CD4-positive, alpha-beta memory T cell (primary cell): ENCODE measurements at regions of chr1 and their contacts with region 1.

Region 1: DNA sequence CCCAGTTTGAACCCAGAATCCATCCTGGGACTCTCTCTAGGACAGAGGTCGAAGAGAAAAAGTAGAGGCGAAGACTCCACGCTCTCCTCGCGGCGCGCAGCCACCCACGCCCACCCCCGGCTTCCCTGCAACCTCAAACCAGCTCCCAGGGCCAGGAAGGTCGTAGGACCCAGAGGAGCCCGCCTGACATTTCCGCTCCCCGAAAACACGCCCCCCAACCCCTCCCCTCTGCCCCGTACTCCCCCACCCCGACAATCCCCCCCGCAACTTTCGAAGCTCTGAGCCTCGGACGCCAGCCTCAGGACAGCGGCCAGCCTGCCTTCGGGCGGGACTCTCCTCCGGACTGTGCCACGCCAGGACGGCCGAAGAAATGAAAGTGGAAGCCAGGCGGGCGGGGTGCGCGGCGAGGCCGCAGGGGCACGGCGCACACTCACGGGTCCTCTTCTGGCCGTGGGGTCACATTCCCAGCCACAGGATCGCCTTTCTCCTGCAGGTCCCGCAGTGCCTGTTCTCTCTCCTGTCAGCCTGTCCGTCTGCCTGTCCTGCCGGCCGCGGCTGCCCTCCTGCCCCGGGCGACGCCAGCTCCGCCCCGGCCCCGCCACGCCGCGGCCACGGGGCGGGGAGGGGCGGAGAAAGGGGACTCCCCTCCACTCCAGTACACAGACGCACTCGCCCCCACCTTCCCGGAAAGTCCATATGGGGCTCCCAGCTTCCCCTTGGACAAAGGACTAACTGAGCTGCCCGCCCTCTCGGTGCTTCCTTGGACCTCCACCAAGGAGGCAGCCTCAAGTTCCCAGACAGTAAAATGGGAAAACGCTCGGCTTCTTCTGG is at the start of gene MOB3C:
- DNase-seq: peak; percentile 62 to 74 (median 63)
- H3K4me3 ChIP-seq: peak within 1 kb of the TSS; percentile 82 to 96
- H3K4me3 Mint-ChIP-seq: peak within 1 kb of the TSS; percentile 92 to 96 (median 94)
- H3K27ac ChIP-seq: peak within 1 kb of the TSS; percentile 81
- H3K27ac Mint-ChIP-seq: peak within 1 kb of the TSS; percentile 87 to 97 (median 94)
- H3K4me1 ChIP-seq: peaks cover 51% of the 10 kb centered on the region
- H3K4me1 Mint-ChIP-seq: peaks cover 22 to 57% (median 41%) of the 10 kb centered on the region in 4 donors
- H3K27me3 ChIP-seq: no peaks in the 10 kb centered on the region
- H3K27me3 Mint-ChIP-seq: no peaks in the 10 kb centered on the region
- total RNA-seq, gene MOB3C: 27.8 to 29.5 TPM

Region 2: GRCh38 chr1:46667782-46668760 is 51.6 kb after region 1 on chr1 and contains the start of gene ATPAF1:
- CTCF ChIA-PET with region 1: no interaction called
- POLR2A ChIA-PET with region 1: interaction called, 23 read pairs
- intact Hi-C with region 1: no loop called
- DNase-seq: peak; percentile 62 to 72 (median 68)
- H3K4me3 ChIP-seq: peak within 1 kb of the TSS; percentile 44 to 66
- H3K4me3 Mint-ChIP-seq: peak within 1 kb of the TSS in 7 of 8 donors; percentile 85 to 91 (median 88)
- H3K27ac ChIP-seq: peak within 1 kb of the TSS; percentile 48
- H3K27ac Mint-ChIP-seq: peak within 1 kb of the TSS; percentile 48 to 85 (median 78)
- H3K4me1 ChIP-seq: peaks cover 23% of the 10 kb centered on the region
- H3K4me1 Mint-ChIP-seq: peaks cover 15 to 26% (median 21%) of the 10 kb centered on the region in 4 donors
- H3K27me3 ChIP-seq: no peaks in the 10 kb centered on the region
- H3K27me3 Mint-ChIP-seq: no peaks in the 10 kb centered on the region
- total RNA-seq, gene ATPAF1: 32.9 to 37.6 TPM

Region 3: DNA sequence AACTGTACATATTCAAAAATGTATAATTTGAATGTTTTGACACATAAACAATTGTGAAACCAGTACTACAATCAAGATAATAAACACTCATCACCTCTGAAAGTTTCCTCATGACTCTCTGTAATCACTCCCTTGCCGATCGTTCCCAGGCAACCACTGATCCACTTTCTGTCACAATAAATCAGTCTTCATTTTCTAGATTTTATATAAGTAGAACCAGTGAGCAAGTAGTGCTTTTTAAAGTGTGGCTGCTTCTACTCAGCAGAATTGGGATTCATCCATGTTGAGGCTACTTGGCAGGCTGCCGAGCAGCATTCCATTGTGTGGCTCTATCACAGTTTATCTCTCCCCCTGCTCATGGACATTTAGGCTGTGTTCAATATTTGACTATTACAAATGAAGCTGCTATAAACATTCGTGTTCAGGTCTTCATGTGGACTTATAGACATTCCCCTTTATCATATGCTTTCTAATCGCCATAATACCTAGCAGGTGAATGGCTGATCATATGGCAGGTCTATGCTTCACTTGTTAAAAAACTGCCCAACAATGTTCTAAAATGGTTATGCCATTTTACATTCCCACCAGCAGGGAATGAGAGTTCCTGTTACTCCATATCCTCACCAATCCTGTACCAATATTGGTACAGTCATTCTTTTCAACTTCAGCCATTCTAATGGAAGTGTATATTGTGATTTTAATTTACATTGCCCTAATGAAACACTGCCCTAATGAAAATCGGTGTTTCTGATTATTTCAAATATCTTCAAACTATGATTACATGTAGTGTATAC is 75.7 kb after region 1 on chr1:
- CTCF ChIA-PET with region 1: no interaction called
- POLR2A ChIA-PET with region 1: no interaction called
- intact Hi-C with region 1: no loop called
- DNase-seq: no peak
- H3K4me3 ChIP-seq: no peak overlapping the region
- H3K4me3 Mint-ChIP-seq: no peak overlapping the region
- H3K27ac ChIP-seq: no peak overlapping the region
- H3K27ac Mint-ChIP-seq: peak overlapping the region in 2 of 7 donors; percentile 29 to 57
- H3K4me1 ChIP-seq: no peaks in the 10 kb centered on the region
- H3K4me1 Mint-ChIP-seq: peaks cover 0 to 6% (median 1%) of the 10 kb centered on the region in 4 donors
- H3K27me3 ChIP-seq: no peaks in the 10 kb centered on the region
- H3K27me3 Mint-ChIP-seq: no peaks in the 10 kb centered on the region

Region 4: DNA sequence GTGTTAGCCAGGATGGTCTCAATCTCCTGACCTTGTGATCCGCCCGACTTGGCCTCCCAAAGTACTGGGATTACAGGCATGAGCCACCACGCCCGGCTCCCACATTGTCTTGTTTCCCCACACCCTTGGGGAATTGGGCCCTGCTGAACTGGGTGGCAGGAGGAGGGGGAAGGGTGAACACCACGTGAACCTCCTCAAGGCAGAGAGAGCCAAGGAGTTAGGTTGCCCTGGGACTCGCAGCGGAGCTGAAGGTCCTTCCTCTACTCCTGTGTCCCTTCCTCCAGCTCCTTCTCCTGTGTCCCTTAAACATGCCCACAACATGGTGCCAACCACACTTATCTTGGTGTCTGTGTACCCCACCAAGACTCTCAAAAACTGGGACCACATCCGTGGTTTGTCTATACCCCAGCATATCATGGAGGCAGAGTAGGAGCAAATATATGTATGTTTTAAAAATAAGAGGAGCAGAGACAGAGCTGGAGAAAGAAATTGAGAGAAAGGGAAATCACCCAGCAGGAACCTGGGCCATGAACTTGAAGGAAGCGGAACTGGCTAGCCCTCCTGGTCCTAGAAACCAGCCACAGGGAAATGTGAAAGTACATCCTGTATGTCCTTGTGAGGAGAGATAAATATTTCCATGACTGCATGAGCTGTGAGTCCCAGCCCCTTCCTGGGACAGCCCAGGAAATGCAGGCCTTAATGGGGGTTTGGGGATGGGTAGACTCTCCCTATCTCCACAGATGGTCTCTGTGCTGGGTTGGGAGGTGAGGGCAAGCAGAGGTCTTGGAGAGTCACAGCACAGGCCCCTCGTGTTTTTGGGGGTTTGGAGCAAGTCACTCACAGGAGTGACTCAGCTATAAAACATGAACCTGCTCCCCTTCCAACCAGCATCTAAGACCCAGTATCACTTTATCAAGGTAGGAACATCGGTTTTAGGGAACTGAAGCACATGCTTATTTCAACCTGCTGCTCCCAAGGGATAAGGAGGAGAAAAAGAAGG is 624.9 kb after region 1 on chr1:
- CTCF ChIA-PET with region 1: no interaction called
- POLR2A ChIA-PET with region 1: no interaction called
- intact Hi-C with region 1: no loop called
- DNase-seq: no peak
- H3K4me3 ChIP-seq: no peak overlapping the region
- H3K4me3 Mint-ChIP-seq: no peak overlapping the region
- H3K27ac ChIP-seq: no peak overlapping the region
- H3K27ac Mint-ChIP-seq: no peak overlapping the region
- H3K4me1 ChIP-seq: peaks cover 13% of the 10 kb centered on the region
- H3K4me1 Mint-ChIP-seq: peaks cover 8 to 10% (median 8%) of the 10 kb centered on the region in 4 donors
- H3K27me3 ChIP-seq: no peaks in the 10 kb centered on the region
- H3K27me3 Mint-ChIP-seq: peaks cover 23 to 25% of the 10 kb centered on the region in 2 donors